Esophagus muscularis mucosa (tissue), 4 donors: ENCODE measurements at regions of chr9 and their contacts with region 1.

Region 1: GRCh38 chr9:132094314-132094791 is 14.7 kb upstream of the MED27 start:
- DNase-seq: no peak
- H3K4me3 ChIP-seq: no peak overlapping the region
- H3K27ac ChIP-seq: no peak overlapping the region
- H3K4me1 ChIP-seq: no peaks in the 10 kb centered on the region
- H3K27me3 ChIP-seq: peaks cover 0 to 26% (median 2%) of the 10 kb centered on the region in 4 donors
- CTCF ChIP-seq: no peak
- EP300 ChIP-seq: no peak
- POLR2A ChIP-seq: no peak

Region 2: DNA sequence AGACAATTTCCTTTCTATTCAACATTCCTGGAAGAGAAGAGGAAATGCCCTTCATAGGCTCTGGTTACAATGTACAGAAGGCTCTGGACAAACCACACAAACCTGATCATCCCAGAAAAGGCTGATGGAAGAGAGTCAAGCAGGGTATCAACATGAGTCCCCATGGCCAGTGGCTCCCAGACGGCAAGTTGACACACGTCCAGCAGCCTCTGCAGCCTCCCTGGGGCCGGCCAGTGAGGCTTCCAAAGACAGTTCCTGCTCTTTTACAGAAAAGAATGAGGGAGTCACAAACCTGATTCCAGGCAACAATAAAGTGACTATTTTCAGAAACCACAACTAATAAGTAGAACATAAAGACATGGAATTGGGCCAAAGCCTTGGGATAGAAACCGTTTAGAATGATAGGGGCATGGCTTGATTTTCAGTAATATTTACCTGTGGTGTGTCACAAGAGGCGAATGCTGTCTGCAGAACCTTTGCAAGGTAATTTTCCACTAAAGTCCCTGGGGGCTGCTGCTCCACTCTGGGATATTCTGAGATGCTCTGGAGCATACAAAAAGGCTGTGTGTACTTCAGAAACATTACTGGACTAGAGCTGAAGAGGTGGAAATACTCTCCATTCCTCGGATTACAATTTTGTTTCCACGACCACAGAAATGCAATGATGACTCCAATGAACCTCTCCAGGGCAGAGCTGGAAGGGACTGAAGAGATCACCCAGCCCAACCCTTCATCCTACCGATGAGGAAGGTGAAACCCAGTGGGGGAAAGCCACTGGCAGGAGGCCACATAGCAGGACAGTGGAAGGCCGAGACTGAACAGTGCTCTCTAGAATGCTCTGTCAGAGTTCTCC is 25.1 kb before region 1 on chr9:
- intact Hi-C with region 1: loop called (anchors 2 kb)
- DNase-seq: no peak
- H3K4me3 ChIP-seq: no peak overlapping the region
- H3K27ac ChIP-seq: no peak overlapping the region
- H3K4me1 ChIP-seq: peaks cover 7 to 18% (median 9%) of the 10 kb centered on the region in 4 donors
- H3K27me3 ChIP-seq: no peaks in the 10 kb centered on the region
- CTCF ChIP-seq: no peak
- EP300 ChIP-seq: no peak
- POLR2A ChIP-seq: no peak